ENCODE measurements at regions of chr5 and their contacts with region 1.

Region 1: DNA sequence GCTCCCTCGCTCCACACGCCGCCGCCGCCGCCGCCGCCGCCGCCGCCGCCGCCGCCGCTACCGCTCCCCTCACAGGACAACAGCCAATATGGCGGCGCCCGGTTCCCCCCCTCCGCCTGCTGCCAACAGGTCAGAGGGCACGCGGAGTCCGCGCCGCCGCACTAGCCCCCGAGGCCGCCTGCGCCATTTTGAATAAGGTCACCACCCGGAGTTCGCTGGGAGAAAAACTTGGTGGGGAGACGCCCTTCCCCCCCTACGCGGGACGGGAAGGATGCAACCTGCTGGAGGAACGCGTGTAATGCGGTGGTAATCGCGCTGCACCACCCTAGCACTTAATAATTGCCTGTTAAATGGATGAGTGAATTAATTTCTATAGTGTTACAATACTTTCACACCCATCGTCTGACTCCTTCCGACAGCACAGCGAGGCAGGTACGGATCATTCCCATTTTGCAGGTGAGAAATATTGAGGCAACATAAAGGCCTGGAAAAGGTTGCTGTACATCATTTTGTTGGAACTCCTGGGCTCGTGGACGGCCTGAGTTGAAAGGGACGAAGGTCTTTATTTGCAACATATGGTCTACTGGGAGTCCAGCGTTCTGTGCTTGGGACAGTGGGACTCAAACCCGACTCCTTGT is at the start of gene FAM193B:
- DNase-seq: peak; percentile 76 to 97
- H3K4me3 ChIP-seq: peak within 1 kb of the TSS; percentile 81 to 87
- H3K27ac ChIP-seq: peak within 1 kb of the TSS; percentile 77 to 81
- H3K4me1 ChIP-seq: peaks cover 8 to 30% of the 10 kb centered on the region in 2 donors
- H3K27me3 ChIP-seq: no peaks in the 10 kb centered on the region
- CTCF ChIP-seq: peak in 1 of 3 experiments; percentile 16
- total RNA-seq, gene FAM193B: 116 TPM

Region 2: DNA sequence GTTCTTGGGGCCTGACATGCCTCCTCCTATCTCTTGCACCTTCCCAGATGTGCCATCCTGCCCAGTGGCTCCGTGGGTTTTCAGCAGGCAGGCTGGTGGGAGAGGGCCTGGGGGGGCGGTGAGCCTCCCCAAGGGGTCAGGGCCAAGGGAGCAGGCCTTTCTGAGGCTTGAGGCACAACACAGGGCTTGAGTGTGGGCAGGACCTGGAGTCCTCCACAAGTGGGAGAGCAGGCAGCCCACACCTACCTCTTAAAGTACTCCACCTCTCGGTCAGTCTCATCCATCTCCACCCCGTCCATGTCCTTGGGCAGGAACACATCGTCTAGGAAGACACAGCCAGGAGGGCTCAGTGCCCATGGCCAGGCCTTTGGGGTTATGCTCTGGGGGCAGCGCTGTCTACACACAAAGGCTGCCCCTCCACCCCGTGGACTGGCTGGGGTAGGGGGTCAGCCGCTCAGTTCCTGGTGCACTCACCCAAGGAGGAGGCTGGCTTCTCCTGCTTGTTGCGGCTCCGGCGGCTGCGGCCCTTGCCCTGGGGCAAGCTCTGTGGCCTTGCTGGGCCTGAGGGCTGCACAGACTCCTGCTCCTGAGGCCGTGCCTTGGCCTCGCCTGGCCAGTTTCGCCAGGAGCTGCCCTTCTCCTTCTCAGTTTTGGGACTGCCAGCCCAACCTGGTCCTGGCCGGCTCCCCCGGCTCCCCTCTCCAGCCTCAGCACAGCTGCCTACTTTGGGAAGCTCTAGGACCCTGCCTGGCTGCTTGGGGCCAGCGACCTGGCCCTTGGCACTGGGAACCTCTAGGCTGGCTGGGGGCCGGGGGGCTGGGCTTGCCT is 30.7 kb before region 1 on chr5:
- intact Hi-C with region 1: no loop called
- DNase-seq: no peak
- H3K4me3 ChIP-seq: no peak overlapping the region
- H3K27ac ChIP-seq: no peak overlapping the region
- H3K4me1 ChIP-seq: no peaks in the 10 kb centered on the region
- H3K27me3 ChIP-seq: no peaks in the 10 kb centered on the region
- CTCF ChIP-seq: no peak

Region 3: DNA sequence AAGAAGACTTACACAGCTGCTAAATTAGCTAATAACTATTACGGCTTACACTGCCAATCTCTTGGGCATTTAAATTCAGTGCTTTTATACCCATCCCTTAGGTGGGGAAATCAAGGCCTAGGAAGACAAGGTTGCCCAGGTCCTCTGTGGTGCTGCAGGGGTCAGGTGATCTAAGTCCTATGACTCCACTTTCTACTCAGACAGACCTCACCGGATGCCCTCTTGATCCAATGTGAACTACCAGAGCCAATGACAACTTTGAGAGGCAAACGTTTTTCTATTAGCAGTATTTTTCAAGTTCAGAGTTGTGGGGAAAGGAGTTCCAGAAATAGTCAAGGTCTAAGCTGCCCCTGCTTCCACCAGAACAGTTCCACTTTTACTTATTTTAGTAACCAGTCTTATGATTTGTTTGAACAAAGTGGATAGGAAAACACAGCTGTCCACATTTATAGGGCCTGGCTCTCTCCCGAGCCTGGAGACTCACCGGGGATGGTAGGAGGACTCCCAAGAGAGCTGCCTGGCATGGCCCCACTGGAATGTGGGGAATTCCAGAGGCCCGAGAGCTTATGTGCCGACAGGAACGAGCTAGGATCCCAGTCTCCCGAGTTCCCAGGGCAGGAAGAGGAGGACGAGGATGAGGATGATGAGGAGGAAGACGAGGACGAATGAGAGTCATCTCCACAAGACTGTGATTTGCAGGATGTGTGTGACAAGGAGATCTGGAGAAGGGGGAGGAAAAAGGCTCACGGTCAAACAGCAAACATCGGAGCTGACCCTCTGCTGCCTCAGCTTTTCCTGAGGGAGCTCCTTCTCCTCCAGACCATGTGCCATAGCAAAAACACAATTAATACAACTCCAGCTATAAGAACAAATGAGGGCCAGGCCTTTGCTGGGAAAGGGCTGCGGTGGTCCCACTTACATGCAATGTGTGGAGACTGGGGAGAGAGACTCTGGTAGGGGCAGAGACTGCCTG is 16.9 kb before region 1 on chr5:
- intact Hi-C with region 1: loop called (anchors 1 kb)
- DNase-seq: peak in 1 of 2 donors; percentile 90
- H3K4me3 ChIP-seq: peak overlapping the region in 1 of 2 donors; percentile 29
- H3K27ac ChIP-seq: peak overlapping the region; percentile 81 to 82
- H3K4me1 ChIP-seq: peaks cover 32 to 54% of the 10 kb centered on the region in 2 donors
- H3K27me3 ChIP-seq: no peaks in the 10 kb centered on the region
- CTCF ChIP-seq: no peak

Region 4: DNA sequence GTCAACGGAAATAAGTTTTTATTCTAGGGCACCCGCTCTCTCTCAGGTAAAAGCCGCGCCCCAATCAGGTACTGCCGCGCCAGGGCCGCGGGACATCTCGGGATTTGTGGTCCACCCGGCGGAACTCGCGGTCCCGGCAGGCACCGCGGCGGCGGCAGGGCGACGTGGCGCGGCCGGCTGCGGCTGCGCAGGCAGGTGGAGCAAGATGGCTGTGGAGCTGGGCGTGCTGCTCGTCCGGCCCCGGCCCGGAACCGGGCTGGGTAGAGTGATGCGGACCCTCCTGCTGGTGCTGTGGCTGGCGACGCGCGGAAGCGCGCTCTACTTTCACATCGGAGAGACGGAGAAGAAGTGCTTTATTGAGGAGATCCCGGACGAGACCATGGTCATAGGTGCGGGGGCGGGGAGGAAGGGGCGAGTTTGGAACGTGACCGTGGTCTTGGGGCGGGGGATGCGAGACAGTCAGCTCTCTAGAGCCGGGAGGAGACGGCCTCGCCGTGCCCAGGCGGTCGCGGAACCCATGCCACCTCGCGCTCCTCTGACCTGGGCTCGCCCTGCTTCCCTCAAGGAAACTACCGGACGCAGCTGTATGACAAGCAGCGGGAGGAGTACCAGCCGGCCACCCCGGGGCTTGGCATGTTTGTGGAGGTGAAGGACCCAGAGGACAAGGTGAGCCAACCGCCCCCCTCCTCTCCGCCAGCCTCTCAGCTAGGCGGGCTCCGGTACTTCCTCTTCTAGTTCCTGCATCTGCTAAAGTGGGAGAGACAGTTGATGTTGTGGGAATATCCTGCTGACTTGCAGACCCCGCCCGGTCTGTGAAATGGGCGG is 37.6 kb after region 1 on chr5 and contains the start of gene TMED9:
- intact Hi-C with region 1: loop called (anchors 2 kb)
- DNase-seq: peak; percentile 43 to 93
- H3K4me3 ChIP-seq: peak within 1 kb of the TSS; percentile 79 to 87
- H3K27ac ChIP-seq: peak within 1 kb of the TSS; percentile 70 to 87
- H3K4me1 ChIP-seq: peaks cover 7 to 15% of the 10 kb centered on the region in 2 donors
- H3K27me3 ChIP-seq: no peaks in the 10 kb centered on the region
- CTCF ChIP-seq: no peak
- total RNA-seq, gene TMED9: 113 TPM